Activated CD8-positive, alpha-beta T cell treated with anti-CD3 and anti-CD28 coated beads, Interleukin-2, amount 10 ng/mL, durations not matched to agents 7 days and 5 days (primary cell): ENCODE measurements at regions of chr20 and their contacts with region 1.

Region 1: GRCh38 chr20:46681032-46681854 is 8.0 kb downstream of the TP53RK start:
- DNase-seq: peak; percentile 82
- ATAC-seq: peak; percentile 80
- H3K4me3 Mint-ChIP-seq: no peak overlapping the region
- H3K27ac Mint-ChIP-seq: peak overlapping the region; percentile 30
- H3K4me1 Mint-ChIP-seq: peaks cover 21% of the 10 kb centered on the region
- H3K27me3 Mint-ChIP-seq: no peaks in the 10 kb centered on the region

Region 2: DNA sequence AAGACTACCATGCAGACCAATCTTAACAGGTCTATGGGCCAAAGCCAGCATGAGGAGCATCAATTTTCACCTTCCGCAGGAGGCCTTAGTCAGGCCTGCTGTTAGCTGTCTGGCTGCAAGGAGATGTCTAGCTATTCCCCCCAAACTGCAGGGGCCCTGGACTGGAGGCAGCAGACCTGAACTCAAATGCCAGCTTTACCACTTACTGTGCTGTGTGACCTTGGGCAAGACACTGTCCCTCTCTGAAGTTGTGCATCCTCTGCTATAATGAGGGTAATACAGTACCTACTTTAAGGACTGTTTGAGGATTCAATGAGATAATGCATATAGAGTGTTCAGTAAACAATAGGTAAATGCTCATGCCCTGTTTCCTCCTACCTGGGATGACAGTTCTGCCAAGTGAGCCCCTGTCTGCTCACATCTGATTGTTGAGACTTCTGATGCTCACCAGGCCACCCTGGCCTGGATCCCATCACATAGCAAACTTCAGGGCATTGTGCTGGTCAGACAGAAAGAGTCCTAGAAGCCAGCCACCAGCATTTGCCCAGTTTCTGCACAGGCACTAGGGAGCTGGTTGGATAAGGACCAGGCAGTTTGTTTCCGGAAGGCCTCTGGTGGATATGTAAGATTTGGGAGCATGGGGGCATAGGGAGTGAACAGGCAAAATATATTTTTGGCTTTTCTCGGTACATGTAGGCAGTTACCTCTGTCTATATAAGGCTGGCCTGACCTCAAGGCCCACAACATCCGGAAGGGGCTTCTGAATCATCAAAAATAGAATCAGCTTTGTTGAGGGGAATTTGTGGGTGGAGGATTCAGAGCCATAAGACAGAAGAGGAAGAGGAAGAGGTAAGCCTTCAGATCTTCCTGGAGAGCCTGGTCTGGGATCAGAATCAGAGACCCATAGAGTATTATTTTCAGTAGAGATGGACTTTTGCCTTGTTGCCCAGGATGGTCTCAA is 128.5 kb before region 1 on chr20:
- CTCF ChIA-PET with region 1: interaction called, 25 read pairs
- POLR2A ChIA-PET with region 1: no interaction called
- DNase-seq: peak; percentile 85
- ATAC-seq: peak; percentile 91
- H3K4me3 Mint-ChIP-seq: peak overlapping the region; percentile 66
- H3K27ac Mint-ChIP-seq: peak overlapping the region; percentile 92
- H3K4me1 Mint-ChIP-seq: peaks cover 71% of the 10 kb centered on the region
- H3K27me3 Mint-ChIP-seq: peaks cover 3% of the 10 kb centered on the region

Region 3: DNA sequence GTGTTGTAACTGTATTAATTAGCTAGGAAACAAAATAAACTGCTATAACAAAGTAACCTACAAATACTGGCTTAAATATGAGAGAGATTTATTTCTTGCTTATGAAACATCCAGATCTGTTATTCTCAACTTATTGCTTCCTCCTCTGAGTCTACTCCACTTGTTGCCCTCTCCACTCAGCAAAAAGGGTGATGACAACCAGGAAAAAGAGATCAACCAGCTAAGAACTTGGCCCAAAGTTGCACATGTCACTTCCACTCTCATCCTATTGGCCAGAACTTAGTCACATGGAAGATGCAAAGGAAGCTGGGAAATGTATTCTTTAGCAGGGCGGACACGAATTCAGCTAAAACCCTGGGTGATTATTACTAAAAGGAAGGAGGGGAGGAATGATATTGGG is 13.3 kb after region 1 on chr20:
- CTCF ChIA-PET with region 1: interaction called, 17 read pairs
- POLR2A ChIA-PET with region 1: no interaction called
- DNase-seq: no peak
- ATAC-seq: no peak
- H3K4me3 Mint-ChIP-seq: no peak overlapping the region
- H3K27ac Mint-ChIP-seq: no peak overlapping the region
- H3K4me1 Mint-ChIP-seq: peaks cover 16% of the 10 kb centered on the region
- H3K27me3 Mint-ChIP-seq: no peaks in the 10 kb centered on the region